Mammary epithelial cell (primary cell): ENCODE measurements at regions of chr1 and their contacts with region 1.

Region 1: DNA sequence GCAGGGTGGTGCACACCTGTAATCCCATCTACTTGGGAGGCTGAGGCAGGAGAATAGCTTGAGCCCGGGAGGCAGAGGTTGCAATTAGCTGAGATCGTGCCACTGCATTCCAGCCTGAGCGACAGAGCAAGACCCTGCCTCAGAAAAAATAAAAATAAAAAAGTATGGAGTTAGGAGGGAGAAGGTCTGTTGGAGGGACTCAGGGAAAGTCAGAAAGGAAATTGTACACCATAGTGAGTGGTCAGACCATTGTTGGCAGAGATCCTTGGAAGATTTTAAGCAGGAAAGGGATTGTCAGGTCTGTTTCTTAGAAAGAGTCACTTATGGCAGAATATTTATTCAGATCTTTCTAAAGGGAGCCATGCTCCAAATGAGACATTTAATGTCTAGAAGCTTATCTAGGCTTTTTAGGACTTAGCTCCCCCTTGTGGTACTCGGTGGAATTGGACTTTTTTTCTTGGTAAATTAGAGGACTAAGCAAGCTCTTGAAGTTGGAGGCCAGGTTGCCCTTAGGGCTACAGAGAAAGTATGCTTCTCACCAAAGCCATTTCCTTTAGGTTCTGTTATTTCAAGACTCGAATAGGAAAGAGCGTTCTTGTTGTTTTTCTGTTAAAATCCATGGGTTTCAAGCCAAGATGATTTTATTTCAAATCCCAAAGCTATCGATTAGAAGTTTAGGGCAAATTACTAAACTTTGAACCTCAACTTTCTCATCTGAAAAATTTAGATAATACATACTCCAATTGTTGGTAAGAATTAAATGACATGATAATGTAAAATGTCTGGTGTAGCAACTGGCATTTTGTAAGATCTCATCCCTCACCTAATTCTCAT is 16.5 kb downstream of the MIA3 start:
- DNase-seq: peak; percentile 76
- H3K4me3 ChIP-seq: no peak overlapping the region
- H3K27ac ChIP-seq: no peak overlapping the region
- H3K4me1 ChIP-seq: no peaks in the 10 kb centered on the region
- H3K27me3 ChIP-seq: no peaks in the 10 kb centered on the region
- CTCF ChIP-seq: peak; percentile 82 to 85

Region 2: GRCh38 chr1:222521299-222522104 is 112.9 kb before region 1 on chr1:
- CTCF ChIA-PET with region 1: no interaction called
- dilution Hi-C with region 1: no loop called
- in situ Hi-C with region 1: no loop called
- intact Hi-C with region 1: no loop called
- DNase-seq: peak; percentile 80
- H3K4me3 ChIP-seq: no peak overlapping the region
- H3K27ac ChIP-seq: no peak overlapping the region
- H3K4me1 ChIP-seq: no peaks in the 10 kb centered on the region
- H3K27me3 ChIP-seq: no peaks in the 10 kb centered on the region
- CTCF ChIP-seq: no peak

Region 3: GRCh38 chr1:222557148-222557547 is 77.2 kb before region 1 on chr1:
- CTCF ChIA-PET with region 1: no interaction called
- dilution Hi-C with region 1: no loop called
- in situ Hi-C with region 1: no loop called
- intact Hi-C with region 1: loop called (anchors 1 kb)
- DNase-seq: no peak
- H3K4me3 ChIP-seq: no peak overlapping the region
- H3K27ac ChIP-seq: no peak overlapping the region
- H3K4me1 ChIP-seq: no peaks in the 10 kb centered on the region
- H3K27me3 ChIP-seq: no peaks in the 10 kb centered on the region
- CTCF ChIP-seq: no peak

Region 4: GRCh38 chr1:222589462-222590302 is 44.7 kb before region 1 on chr1 and contains the start of gene TAF1A:
- CTCF ChIA-PET with region 1: no interaction called
- dilution Hi-C with region 1: no loop called
- in situ Hi-C with region 1: no loop called
- intact Hi-C with region 1: loop called (anchors 5 kb)
- DNase-seq: peak; percentile 84
- H3K4me3 ChIP-seq: peak within 1 kb of the TSS; percentile 67 to 80 (median 71)
- H3K27ac ChIP-seq: peak within 1 kb of the TSS; percentile 80
- H3K4me1 ChIP-seq: peaks cover 7% of the 10 kb centered on the region
- H3K27me3 ChIP-seq: no peaks in the 10 kb centered on the region
- CTCF ChIP-seq: no peak
- total RNA-seq, gene TAF1A: 8.0 to 10.2 TPM